ENCODE measurements at regions of chr16 and their contacts with region 1.

Region 1: DNA sequence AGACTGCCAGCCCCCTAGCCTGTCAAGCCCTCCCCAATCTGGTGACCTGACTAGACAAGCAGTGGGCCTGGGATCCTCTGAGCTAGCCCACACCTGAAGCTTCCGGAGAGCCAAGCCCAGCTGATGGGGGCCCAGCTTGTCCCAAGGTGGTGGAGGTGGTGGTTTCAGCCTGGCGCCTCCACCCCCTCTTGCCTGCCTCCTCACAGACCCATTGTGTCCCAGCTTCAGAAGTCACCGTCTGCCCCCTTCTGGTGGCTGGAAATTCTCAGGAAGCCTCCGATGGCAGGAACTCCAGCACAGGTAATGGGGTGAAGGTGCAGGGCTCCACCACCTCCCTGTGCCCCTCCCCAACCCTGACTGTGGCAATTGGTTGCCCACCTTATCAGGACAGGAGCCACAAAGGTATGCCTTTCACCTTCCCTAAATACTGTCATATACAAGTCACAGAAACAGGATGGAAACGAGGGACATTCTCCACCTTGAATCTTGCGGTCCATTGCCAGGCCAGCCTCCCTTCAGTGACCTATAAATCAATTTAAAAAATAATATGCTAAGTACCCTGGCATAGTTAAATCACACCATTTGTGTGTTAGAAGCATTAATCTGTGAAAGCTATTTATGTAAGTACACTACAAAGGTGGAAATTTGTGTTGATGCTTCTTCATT is 66.0 kb upstream of the ZNF423 start:
- DNase-seq: peak; percentile 87
- ATAC-seq: peak; percentile 92
- H3K4me3 Mint-ChIP-seq: no peak overlapping the region
- H3K27ac Mint-ChIP-seq: no peak overlapping the region
- H3K4me1 Mint-ChIP-seq: peaks cover 3% of the 10 kb centered on the region
- H3K27me3 Mint-ChIP-seq: no peaks in the 10 kb centered on the region
- CTCF ChIP-seq: peak; percentile 55; the same call in 1 of the 2 replicates

Region 2: GRCh38 chr16:49663081-49664065 is 258.6 kb before region 1 on chr16:
- CTCF ChIA-PET with region 1: no interaction called
- POLR2A ChIA-PET with region 1: no interaction called
- DNase-seq: no peak
- ATAC-seq: no peak
- H3K4me3 Mint-ChIP-seq: no peak overlapping the region
- H3K27ac Mint-ChIP-seq: no peak overlapping the region
- H3K4me1 Mint-ChIP-seq: peaks cover 34% of the 10 kb centered on the region
- H3K27me3 Mint-ChIP-seq: no peaks in the 10 kb centered on the region
- CTCF ChIP-seq: no peak

Region 3: DNA sequence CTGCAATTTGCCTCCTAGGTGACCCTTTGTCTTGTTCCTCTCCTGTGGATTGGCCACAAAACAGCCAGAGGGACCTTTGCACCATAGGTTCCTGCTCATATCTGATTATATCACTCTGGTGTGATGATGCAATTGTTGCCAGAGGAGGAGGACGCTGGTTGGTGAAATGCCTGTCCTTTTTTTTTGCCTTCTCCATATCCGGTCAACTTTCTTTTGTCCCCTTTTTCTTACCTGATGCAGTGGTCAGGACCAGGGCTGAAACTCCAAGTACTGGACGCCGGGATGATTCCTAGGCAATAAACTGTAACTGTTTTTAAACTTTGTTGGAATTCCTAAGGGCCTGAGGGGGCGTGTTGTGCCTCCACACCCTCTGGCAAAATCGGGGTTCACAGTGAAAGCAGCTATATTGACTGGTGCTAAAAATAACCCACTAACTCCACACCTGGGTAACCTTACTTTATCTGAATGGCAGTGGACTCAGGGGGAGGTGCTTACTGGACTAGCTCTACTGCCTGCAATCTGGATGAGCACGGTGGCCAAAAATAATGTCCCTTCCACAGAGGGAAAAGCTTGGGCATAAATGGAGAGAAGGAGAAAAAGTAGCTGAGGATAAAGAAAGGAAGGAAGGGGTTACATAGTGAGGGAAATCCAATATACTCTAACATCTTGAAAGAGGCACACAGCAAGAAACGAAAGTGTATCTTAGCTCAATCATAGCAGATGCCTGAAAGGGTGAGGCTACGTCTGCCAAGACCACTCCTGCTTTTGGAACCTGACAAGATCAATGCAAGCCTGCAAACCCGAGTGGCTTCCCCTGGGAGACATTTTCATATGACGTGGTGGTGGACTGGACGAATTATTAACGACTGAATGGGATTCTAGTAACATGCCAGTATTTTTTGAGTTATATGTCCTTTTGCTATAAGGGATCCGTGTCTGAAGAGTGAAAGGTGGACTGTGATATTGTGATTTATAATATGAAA is 37.6 kb before region 1 on chr16:
- CTCF ChIA-PET with region 1: interaction called, 17 read pairs
- POLR2A ChIA-PET with region 1: no interaction called
- DNase-seq: no peak
- ATAC-seq: no peak
- H3K4me3 Mint-ChIP-seq: no peak overlapping the region
- H3K27ac Mint-ChIP-seq: no peak overlapping the region
- H3K4me1 Mint-ChIP-seq: peaks cover 12% of the 10 kb centered on the region
- H3K27me3 Mint-ChIP-seq: no peaks in the 10 kb centered on the region
- CTCF ChIP-seq: no peak

Region 4: DNA sequence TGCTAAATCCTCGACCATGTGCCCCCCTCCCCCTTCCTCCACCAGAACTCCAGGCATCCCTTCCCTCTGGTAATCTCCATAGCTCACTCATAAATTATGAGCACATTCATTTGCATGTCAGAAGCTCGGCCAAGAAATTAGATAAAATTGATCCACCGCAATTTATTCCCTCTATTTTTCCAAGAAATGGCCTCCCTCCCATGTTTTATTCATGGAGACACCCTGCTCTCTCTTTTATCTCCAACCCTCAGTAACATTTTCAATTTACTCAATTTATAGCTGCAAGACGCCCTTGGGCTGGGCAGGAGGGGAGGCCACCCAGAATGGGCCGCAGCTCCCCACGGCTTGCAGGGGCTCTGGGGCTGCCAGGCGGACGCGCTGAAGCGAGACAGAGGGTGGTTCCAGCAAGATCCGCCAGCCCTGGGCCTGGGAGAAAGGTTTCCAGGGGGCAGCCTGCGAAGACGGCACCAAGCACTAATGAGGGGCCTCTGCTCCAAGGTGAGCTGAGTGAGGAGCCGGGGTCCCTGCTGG is 11.3 kb before region 1 on chr16:
- CTCF ChIA-PET with region 1: interaction called, 11 read pairs
- POLR2A ChIA-PET with region 1: no interaction called
- DNase-seq: no peak
- ATAC-seq: no peak
- H3K4me3 Mint-ChIP-seq: no peak overlapping the region
- H3K27ac Mint-ChIP-seq: no peak overlapping the region
- H3K4me1 Mint-ChIP-seq: peaks cover 5% of the 10 kb centered on the region; the same call in 1 of the 2 replicates
- H3K27me3 Mint-ChIP-seq: no peaks in the 10 kb centered on the region; the same call in 1 of the 2 replicates
- CTCF ChIP-seq: no peak